ENCODE measurements at regions of chr5 and their contacts with region 1.

Region 1: GRCh38 chr5:175534070-175534932 is 55.9 kb downstream of the SFXN1 start:
- DNase-seq: peak; percentile 66 to 95 (median 86)

Region 2: DNA sequence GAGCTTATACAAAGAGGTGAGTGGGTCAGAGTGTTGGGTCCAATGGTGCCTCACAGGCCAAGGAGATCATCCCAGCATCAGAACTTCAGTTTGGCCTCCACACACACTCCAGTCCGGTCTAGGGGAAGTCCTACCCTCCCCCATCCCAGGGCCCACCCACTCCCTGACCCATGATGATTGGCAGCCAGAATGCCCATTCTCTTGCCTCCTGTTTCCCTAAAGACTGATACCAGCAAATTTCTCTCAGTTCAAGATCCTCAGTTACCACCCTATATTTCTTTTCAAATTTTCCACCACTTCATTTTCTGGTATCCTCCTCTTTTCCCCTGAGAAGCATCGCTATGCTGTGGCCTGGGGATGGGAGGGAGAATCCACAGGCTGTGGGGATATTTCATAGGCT is 112.2 kb before region 1 on chr5:
- intact Hi-C with region 1: no loop called
- DNase-seq: no peak

Region 3: GRCh38 chr5:175696139-175696854 is 162.0 kb after region 1 on chr5:
- intact Hi-C with region 1: loop called (anchors 10 kb)
- DNase-seq: peak in 41 of 42 donors; percentile 44 to 86 (median 69)

Region 4: GRCh38 chr5:175724311-175725275 is 190.3 kb after region 1 on chr5:
- intact Hi-C with region 1: loop called (anchors 5 kb)
- DNase-seq: peak in 3 of 42 donors; percentile 5 to 38 (median 33)